B cell (primary cell): ENCODE measurements at regions of chr22 and their contacts with region 1.

Region 1: DNA sequence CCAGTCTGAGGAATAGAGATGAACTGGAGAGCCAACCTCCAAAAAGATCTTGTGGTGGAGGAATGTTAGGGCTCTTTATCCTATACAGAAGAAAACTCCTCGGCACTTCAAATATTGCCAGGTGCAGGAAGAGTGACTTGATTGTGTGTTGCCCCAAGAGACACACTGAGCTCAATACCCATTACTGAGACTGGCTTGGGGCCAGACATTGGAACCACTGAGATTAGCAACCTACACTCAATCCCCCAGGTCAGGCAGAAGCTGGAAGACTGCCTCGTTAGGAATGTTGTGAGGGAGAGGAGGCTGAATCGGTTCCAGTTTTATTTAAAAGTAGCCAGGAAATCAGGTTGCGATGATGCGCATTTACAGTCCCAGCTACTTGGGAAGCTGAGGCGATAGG is 2.4 kb upstream of the SGSM3 start:
- DNase-seq: no peak
- ATAC-seq: no peak
- H3K4me3 ChIP-seq: no peak overlapping the region
- H3K4me3 Mint-ChIP-seq: no peak overlapping the region
- H3K27ac ChIP-seq: no peak overlapping the region
- H3K27ac Mint-ChIP-seq: peak overlapping the region; percentile 26
- H3K4me1 ChIP-seq: peaks cover 6 to 9% of the 10 kb centered on the region in 2 donors
- H3K4me1 Mint-ChIP-seq: peaks cover 18% of the 10 kb centered on the region
- H3K27me3 ChIP-seq: no peaks in the 10 kb centered on the region
- H3K27me3 Mint-ChIP-seq: no peaks in the 10 kb centered on the region
- CTCF ChIP-seq: no peak

Region 2: GRCh38 chr22:40177738-40178416 is 190.1 kb before region 1 on chr22 and contains the start of gene TNRC6B:
- CTCF ChIA-PET with region 1: no interaction called
- POLR2A ChIA-PET with region 1: no interaction called
- intact Hi-C with region 1: loop called (anchors 1 kb)
- DNase-seq: peak; percentile 93
- ATAC-seq: peak; percentile 90
- H3K4me3 ChIP-seq: peak within 1 kb of the TSS; percentile 56 to 100 (median 72)
- H3K4me3 Mint-ChIP-seq: peak within 1 kb of the TSS; percentile 84
- H3K27ac ChIP-seq: peak within 1 kb of the TSS; percentile 65 to 79
- H3K27ac Mint-ChIP-seq: peak within 1 kb of the TSS; percentile 84
- H3K4me1 ChIP-seq: peaks cover 41 to 42% of the 10 kb centered on the region in 2 donors
- H3K4me1 Mint-ChIP-seq: peaks cover 61% of the 10 kb centered on the region
- H3K27me3 ChIP-seq: no peaks in the 10 kb centered on the region
- H3K27me3 Mint-ChIP-seq: no peaks in the 10 kb centered on the region
- CTCF ChIP-seq: no peak
- total RNA-seq, gene TNRC6B: 210 and 248 TPM in 2 replicates

Region 3: GRCh38 chr22:40346178-40347118 is 21.6 kb before region 1 on chr22 and contains the start of gene ADSL:
- CTCF ChIA-PET with region 1: interaction called, 6 read pairs
- POLR2A ChIA-PET with region 1: no interaction called
- intact Hi-C with region 1: loop called (anchors 1 kb)
- DNase-seq: peak; percentile 91
- ATAC-seq: peak; percentile 89
- H3K4me3 ChIP-seq: peak within 1 kb of the TSS; percentile 84 to 92 (median 88)
- H3K4me3 Mint-ChIP-seq: peak within 1 kb of the TSS; percentile 98
- H3K27ac ChIP-seq: peak within 1 kb of the TSS; percentile 74 to 75
- H3K27ac Mint-ChIP-seq: peak within 1 kb of the TSS; percentile 97
- H3K4me1 ChIP-seq: peaks cover 11 to 27% of the 10 kb centered on the region in 2 donors
- H3K4me1 Mint-ChIP-seq: peaks cover 32% of the 10 kb centered on the region
- H3K27me3 ChIP-seq: no peaks in the 10 kb centered on the region
- H3K27me3 Mint-ChIP-seq: no peaks in the 10 kb centered on the region
- CTCF ChIP-seq: no peak
- total RNA-seq, gene ADSL: 56.3 and 63.8 TPM in 2 replicates

Region 4: DNA sequence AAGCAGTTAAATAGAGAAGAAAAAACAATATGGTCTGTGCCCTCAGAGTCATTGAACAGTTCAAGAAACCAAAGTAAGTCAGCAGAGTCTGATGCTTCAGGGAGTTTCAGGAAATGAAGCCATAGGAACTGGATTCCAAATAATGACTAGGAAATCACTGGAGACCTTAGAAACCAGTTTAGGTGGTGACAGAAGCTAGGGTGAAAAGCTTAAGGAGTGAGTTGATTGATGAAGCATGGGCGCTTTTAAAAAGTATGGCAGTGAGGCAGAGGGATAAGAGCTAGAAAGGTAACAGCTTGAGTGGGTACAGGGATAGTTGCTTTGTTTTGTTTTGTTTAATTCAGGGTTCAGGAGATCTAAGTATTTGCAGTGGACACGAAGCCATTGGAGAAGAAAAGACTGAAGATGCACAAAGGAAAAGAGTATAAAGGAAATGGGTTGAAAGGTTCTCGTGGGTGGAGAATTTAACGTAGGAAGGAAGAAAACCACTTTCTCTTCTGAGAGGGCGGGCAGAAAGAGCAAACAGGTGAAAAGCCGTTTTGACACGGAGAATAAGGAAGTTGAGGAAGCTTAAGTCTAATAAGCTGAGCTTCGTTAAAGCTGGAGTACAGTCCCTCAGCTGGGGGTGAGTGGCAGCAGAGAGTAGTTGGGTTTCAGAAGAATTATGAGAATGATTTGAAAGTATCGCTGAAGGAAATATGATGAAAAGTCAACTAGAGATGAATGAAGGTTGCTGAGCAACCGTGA is 17.2 kb after region 1 on chr22:
- CTCF ChIA-PET with region 1: interaction called, 3 read pairs
- POLR2A ChIA-PET with region 1: no interaction called
- intact Hi-C with region 1: loop called (anchors 1 kb)
- DNase-seq: peak; percentile 82
- ATAC-seq: peak; percentile 98
- H3K4me3 ChIP-seq: peak overlapping the region; percentile 18 to 63 (median 50)
- H3K4me3 Mint-ChIP-seq: peak overlapping the region; percentile 85
- H3K27ac ChIP-seq: peak overlapping the region; percentile 82 to 87
- H3K27ac Mint-ChIP-seq: peak overlapping the region; percentile 92
- H3K4me1 ChIP-seq: peaks cover 59 to 75% of the 10 kb centered on the region in 2 donors
- H3K4me1 Mint-ChIP-seq: peaks cover 63% of the 10 kb centered on the region
- H3K27me3 ChIP-seq: no peaks in the 10 kb centered on the region
- H3K27me3 Mint-ChIP-seq: no peaks in the 10 kb centered on the region
- CTCF ChIP-seq: peak; percentile 30

Region 5: DNA sequence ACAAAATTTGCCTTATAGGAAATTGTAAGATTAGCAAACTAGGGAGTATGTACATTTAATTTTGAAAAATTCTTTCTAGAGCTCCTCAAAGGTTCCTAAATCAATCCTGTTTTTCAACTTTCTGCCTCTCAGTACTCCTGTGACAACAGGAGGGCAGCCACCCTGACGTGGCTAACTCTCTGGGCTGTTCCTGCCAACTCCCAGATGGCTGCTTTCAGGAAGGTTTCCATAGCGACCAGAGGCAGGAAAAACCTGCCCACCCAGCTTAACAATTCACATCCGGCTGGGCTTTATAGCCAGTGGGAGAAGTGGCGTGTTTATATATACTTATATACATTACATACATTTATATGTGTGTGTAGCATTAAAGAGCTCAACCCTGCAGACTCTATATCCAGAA is 28.9 kb after region 1 on chr22:
- CTCF ChIA-PET with region 1: interaction called, 4 read pairs
- POLR2A ChIA-PET with region 1: interaction called, 5 read pairs
- intact Hi-C with region 1: loop called (anchors 2 kb)
- DNase-seq: no peak
- ATAC-seq: no peak
- H3K4me3 ChIP-seq: no peak overlapping the region
- H3K4me3 Mint-ChIP-seq: peak overlapping the region; percentile 56
- H3K27ac ChIP-seq: peak overlapping the region; percentile 46 to 96
- H3K27ac Mint-ChIP-seq: peak overlapping the region; percentile 92
- H3K4me1 ChIP-seq: peaks cover 86% of the 10 kb centered on the region in 2 donors
- H3K4me1 Mint-ChIP-seq: peaks cover 79% of the 10 kb centered on the region
- H3K27me3 ChIP-seq: no peaks in the 10 kb centered on the region
- H3K27me3 Mint-ChIP-seq: no peaks in the 10 kb centered on the region
- CTCF ChIP-seq: no peak

Region 6: GRCh38 chr22:40418366-40419201 is 50.6 kb after region 1 on chr22:
- CTCF ChIA-PET with region 1: interaction called, 5 read pairs
- POLR2A ChIA-PET with region 1: interaction called, 4 read pairs
- intact Hi-C with region 1: loop called (anchors 1 kb)
- DNase-seq: peak; percentile 62
- ATAC-seq: peak; percentile 20
- H3K4me3 ChIP-seq: no peak overlapping the region
- H3K4me3 Mint-ChIP-seq: no peak overlapping the region
- H3K27ac ChIP-seq: peak overlapping the region; percentile 16 to 17
- H3K27ac Mint-ChIP-seq: peak overlapping the region; percentile 64
- H3K4me1 ChIP-seq: peaks cover 54 to 64% of the 10 kb centered on the region in 2 donors
- H3K4me1 Mint-ChIP-seq: peaks cover 60% of the 10 kb centered on the region
- H3K27me3 ChIP-seq: no peaks in the 10 kb centered on the region
- H3K27me3 Mint-ChIP-seq: no peaks in the 10 kb centered on the region
- CTCF ChIP-seq: no peak

Region 7: GRCh38 chr22:40517631-40518030 is 149.6 kb after region 1 on chr22:
- CTCF ChIA-PET with region 1: no interaction called
- POLR2A ChIA-PET with region 1: no interaction called
- intact Hi-C with region 1: no loop called
- DNase-seq: no peak
- ATAC-seq: no peak
- H3K4me3 ChIP-seq: no peak overlapping the region
- H3K4me3 Mint-ChIP-seq: no peak overlapping the region
- H3K27ac ChIP-seq: no peak overlapping the region
- H3K27ac Mint-ChIP-seq: no peak overlapping the region
- H3K4me1 ChIP-seq: peaks cover 7 to 8% of the 10 kb centered on the region in 2 donors
- H3K4me1 Mint-ChIP-seq: peaks cover 24% of the 10 kb centered on the region
- H3K27me3 ChIP-seq: no peaks in the 10 kb centered on the region
- H3K27me3 Mint-ChIP-seq: no peaks in the 10 kb centered on the region
- CTCF ChIP-seq: no peak